Activated CD4-positive, alpha-beta T cell treated with anti-CD3 and anti-CD28 coated beads, Interleukin-2, amount 10 ng/mL, durations not matched to agents 24 days and 14 days (primary cell): ENCODE measurements at regions of chr15 and their contacts with region 1.

Region 1: DNA sequence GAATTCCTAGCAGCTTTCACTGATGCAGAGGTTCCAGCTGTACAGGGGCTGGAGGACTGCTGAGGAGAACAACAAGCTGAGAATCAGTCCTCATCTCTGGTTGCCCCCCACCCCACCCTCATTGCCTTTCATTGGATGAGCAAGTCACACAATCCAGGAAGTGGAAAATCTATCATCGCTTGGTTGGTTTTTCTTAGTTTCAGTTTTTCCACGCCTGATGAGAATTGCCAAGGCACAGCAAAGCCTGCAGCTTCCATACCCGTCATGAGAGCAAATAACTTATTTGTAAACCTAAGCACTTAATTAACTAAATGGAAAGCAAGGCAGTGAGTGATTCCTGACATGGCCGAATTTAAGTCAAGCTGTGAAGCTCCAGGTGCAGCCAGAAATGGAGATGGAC is 21.4 kb upstream of the LIPC start:
- DNase-seq: peak; percentile 80
- H3K4me3 Mint-ChIP-seq: peak overlapping the region; percentile 88
- H3K27ac Mint-ChIP-seq: peak overlapping the region; percentile 92
- H3K4me1 Mint-ChIP-seq: peaks cover 28% of the 10 kb centered on the region
- H3K27me3 Mint-ChIP-seq: no peaks in the 10 kb centered on the region

Region 2: GRCh38 chr15:58269455-58270414 is 140.6 kb before region 1 on chr15:
- intact Hi-C with region 1: loop called (anchors 10 kb)
- DNase-seq: peak; percentile 83
- H3K4me3 Mint-ChIP-seq: peak overlapping the region; percentile 15
- H3K27ac Mint-ChIP-seq: peak overlapping the region; percentile 63
- H3K4me1 Mint-ChIP-seq: peaks cover 14% of the 10 kb centered on the region
- H3K27me3 Mint-ChIP-seq: no peaks in the 10 kb centered on the region

Region 3: GRCh38 chr15:58357521-58358476 is 52.6 kb before region 1 on chr15:
- intact Hi-C with region 1: loop called (anchors 5 kb)
- DNase-seq: peak; percentile 83
- H3K4me3 Mint-ChIP-seq: peak overlapping the region; percentile 16
- H3K27ac Mint-ChIP-seq: peak overlapping the region; percentile 87
- H3K4me1 Mint-ChIP-seq: peaks cover 45% of the 10 kb centered on the region
- H3K27me3 Mint-ChIP-seq: no peaks in the 10 kb centered on the region

Region 4: DNA sequence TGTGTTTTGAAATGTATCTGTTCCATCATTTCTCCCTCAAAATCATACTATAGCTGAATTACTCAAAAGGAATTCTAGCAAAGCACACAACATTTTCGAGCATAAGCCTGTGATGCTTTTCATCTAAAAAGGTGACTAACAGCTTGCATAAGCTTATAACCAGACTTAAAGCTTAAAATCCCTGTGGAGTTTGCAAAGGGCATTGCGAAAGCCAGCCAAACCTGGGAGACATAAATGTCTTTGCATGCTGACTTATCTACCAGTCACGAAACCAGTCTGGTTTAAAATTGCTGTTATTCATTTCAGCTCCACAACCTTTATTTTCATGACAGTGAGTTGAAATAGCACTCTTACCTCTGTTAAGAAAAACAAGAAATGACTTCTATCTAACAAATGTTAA is 14.2 kb before region 1 on chr15:
- intact Hi-C with region 1: no loop called
- DNase-seq: no peak
- H3K4me3 Mint-ChIP-seq: no peak overlapping the region
- H3K27ac Mint-ChIP-seq: no peak overlapping the region
- H3K4me1 Mint-ChIP-seq: no peaks in the 10 kb centered on the region
- H3K27me3 Mint-ChIP-seq: peaks cover 8% of the 10 kb centered on the region

Region 5: GRCh38 chr15:58423831-58424608 is 13.7 kb after region 1 on chr15:
- intact Hi-C with region 1: no loop called
- DNase-seq: no peak
- H3K4me3 Mint-ChIP-seq: no peak overlapping the region
- H3K27ac Mint-ChIP-seq: no peak overlapping the region
- H3K4me1 Mint-ChIP-seq: peaks cover 17% of the 10 kb centered on the region
- H3K27me3 Mint-ChIP-seq: no peaks in the 10 kb centered on the region

Region 6: GRCh38 chr15:58608129-58608590 is 197.8 kb after region 1 on chr15:
- intact Hi-C with region 1: no loop called
- DNase-seq: no peak
- H3K4me3 Mint-ChIP-seq: no peak overlapping the region
- H3K27ac Mint-ChIP-seq: peak overlapping the region; percentile 2
- H3K4me1 Mint-ChIP-seq: peaks cover 16% of the 10 kb centered on the region
- H3K27me3 Mint-ChIP-seq: no peaks in the 10 kb centered on the region